ENCODE measurements at regions of chr5 and their contacts with region 1.

Region 1: DNA sequence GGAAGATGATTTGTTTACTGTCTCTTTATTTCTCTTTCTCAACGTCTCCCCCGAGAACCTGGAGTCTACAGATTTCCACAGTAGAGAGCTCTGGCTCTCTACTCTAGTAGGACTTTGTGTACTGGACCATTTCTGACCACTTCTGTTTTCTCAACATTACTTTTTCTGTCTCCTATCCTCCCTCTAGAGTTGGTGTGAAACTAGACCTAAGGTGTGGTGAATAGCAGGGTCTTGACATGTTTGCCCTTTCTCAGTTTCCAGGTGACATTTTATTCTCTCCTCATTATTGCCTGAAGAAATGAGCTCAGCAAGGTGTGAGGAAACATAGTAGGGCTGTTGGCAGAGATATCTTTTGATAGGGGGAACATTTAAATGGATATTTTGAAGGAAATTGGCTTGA is 62.1 kb upstream of the IL6ST start:
- DNase-seq: no peak
- H3K4me3 Mint-ChIP-seq: no peak overlapping the region
- H3K27ac Mint-ChIP-seq: peak overlapping the region; percentile 46
- H3K4me1 Mint-ChIP-seq: peaks cover 51% of the 10 kb centered on the region
- H3K27me3 Mint-ChIP-seq: peaks cover 4% of the 10 kb centered on the region

Region 2: GRCh38 chr5:54148067-54148466 is 1908.8 kb before region 1 on chr5:
- intact Hi-C with region 1: no loop called
- DNase-seq: no peak
- H3K4me3 Mint-ChIP-seq: no peak overlapping the region
- H3K27ac Mint-ChIP-seq: no peak overlapping the region
- H3K4me1 Mint-ChIP-seq: no peaks in the 10 kb centered on the region
- H3K27me3 Mint-ChIP-seq: no peaks in the 10 kb centered on the region

Region 3: GRCh38 chr5:55829956-55830355 is 226.9 kb before region 1 on chr5:
- intact Hi-C with region 1: no loop called
- DNase-seq: no peak
- H3K4me3 Mint-ChIP-seq: no peak overlapping the region
- H3K27ac Mint-ChIP-seq: no peak overlapping the region
- H3K4me1 Mint-ChIP-seq: peaks cover 2% of the 10 kb centered on the region
- H3K27me3 Mint-ChIP-seq: peaks cover 7% of the 10 kb centered on the region

Region 4: GRCh38 chr5:55850839-55851674 is 205.8 kb before region 1 on chr5 and contains the start of gene IL31RA:
- intact Hi-C with region 1: loop called (anchors 5 kb)
- DNase-seq: no peak
- H3K4me3 Mint-ChIP-seq: no peak within 1 kb of the TSS
- H3K27ac Mint-ChIP-seq: peak within 1 kb of the TSS; percentile 14
- H3K4me1 Mint-ChIP-seq: peaks cover 49% of the 10 kb centered on the region
- H3K27me3 Mint-ChIP-seq: no peaks in the 10 kb centered on the region
- total RNA-seq, gene IL31RA: 0.63 and 0.92 TPM in 2 replicates

Region 5: GRCh38 chr5:56012281-56012963 is 44.5 kb before region 1 on chr5:
- intact Hi-C with region 1: loop called (anchors 5 kb)
- DNase-seq: peak; percentile 84
- H3K4me3 Mint-ChIP-seq: peak overlapping the region; percentile 47
- H3K27ac Mint-ChIP-seq: peak overlapping the region; percentile 47
- H3K4me1 Mint-ChIP-seq: peaks cover 28% of the 10 kb centered on the region
- H3K27me3 Mint-ChIP-seq: no peaks in the 10 kb centered on the region

Region 6: GRCh38 chr5:56148453-56148971 is 91.6 kb after region 1 on chr5:
- intact Hi-C with region 1: loop called (anchors 5 kb)
- DNase-seq: peak; percentile 88
- H3K4me3 Mint-ChIP-seq: peak overlapping the region; percentile 21
- H3K27ac Mint-ChIP-seq: peak overlapping the region; percentile 83
- H3K4me1 Mint-ChIP-seq: peaks cover 38% of the 10 kb centered on the region
- H3K27me3 Mint-ChIP-seq: no peaks in the 10 kb centered on the region